H1 (cell line): ENCODE measurements at regions of chr12 and their contacts with region 1.

Region 1: DNA sequence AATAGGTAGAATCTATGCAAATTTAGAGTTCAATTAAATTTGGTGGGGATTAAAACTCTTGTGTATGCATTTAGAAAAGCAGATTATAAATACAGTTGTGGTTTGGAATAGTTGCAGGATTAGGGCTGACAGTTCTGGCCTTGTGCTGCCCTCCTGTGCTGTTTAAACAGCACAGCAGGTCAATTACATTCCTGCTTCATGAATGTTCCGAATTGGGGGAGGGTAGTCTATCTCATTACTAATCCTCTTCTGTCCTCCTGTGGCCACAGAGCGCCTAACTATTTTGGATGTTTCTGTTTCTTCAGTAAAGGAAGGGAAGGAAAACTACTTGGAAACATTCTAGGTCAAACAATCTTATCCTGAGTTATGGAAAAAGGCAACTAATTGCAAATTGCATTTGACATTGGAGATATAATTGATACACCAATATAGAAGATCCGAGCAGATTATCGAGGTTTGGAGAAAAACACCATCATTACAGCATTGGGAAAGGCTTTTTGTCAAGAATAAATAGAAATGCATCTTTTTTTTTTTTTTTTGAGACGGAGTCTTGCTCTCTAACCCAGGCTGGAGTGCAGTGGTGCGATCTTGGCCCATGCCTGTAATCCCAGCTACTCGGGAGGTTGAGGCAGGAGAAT is 8.7 kb upstream of the GPR19 start:
- DNase-seq: no peak
- H3K4me3 ChIP-seq: no peak overlapping the region
- H3K27ac ChIP-seq: no peak overlapping the region
- H3K4me1 ChIP-seq: peaks cover 0 to 5% (median 2%) of the 10 kb centered on the region in 4 experiments; a peak in 4 of 7 replicates
- H3K27me3 ChIP-seq: no peaks in the 10 kb centered on the region
- CTCF ChIP-seq: peak; percentile 44 to 99 (median 99)
- EP300 ChIP-seq: no peak
- POLR2A ChIP-seq: no peak
- RAD21 ChIP-seq: peak; percentile 100

Region 2: GRCh38 chr12:12376646-12377448 is 327.9 kb before region 1 on chr12:
- CTCF ChIA-PET with region 1: interaction called, 49 read pairs
- POLR2A ChIA-PET with region 1: no interaction called
- DNase-seq: no peak
- H3K4me3 ChIP-seq: no peak overlapping the region
- H3K27ac ChIP-seq: no peak overlapping the region
- H3K4me1 ChIP-seq: no peaks in the 10 kb centered on the region
- H3K27me3 ChIP-seq: no peaks in the 10 kb centered on the region
- CTCF ChIP-seq: peak in 2 of 3 experiments; percentile 50 to 60; a peak in 2 of 4 replicates
- EP300 ChIP-seq: no peak
- POLR2A ChIP-seq: no peak
- RAD21 ChIP-seq: peak; percentile 95 to 97

Region 3: GRCh38 chr12:12654691-12655460 is 49.8 kb before region 1 on chr12:
- CTCF ChIA-PET with region 1: interaction called, 14 read pairs
- POLR2A ChIA-PET with region 1: interaction called, 3 read pairs
- DNase-seq: no peak
- H3K4me3 ChIP-seq: no peak overlapping the region
- H3K27ac ChIP-seq: no peak overlapping the region
- H3K4me1 ChIP-seq: peaks cover 2 to 9% (median 5%) of the 10 kb centered on the region in 4 experiments
- H3K27me3 ChIP-seq: no peaks in the 10 kb centered on the region
- CTCF ChIP-seq: no peak
- EP300 ChIP-seq: no peak
- POLR2A ChIP-seq: no peak
- RAD21 ChIP-seq: no peak

Region 4: GRCh38 chr12:12673296-12673695 is 31.4 kb before region 1 on chr12:
- CTCF ChIA-PET with region 1: interaction called, 13 read pairs
- POLR2A ChIA-PET with region 1: interaction called, 3 read pairs
- DNase-seq: peak in 1 of 2 experiments; percentile 39
- H3K4me3 ChIP-seq: no peak overlapping the region
- H3K27ac ChIP-seq: no peak overlapping the region
- H3K4me1 ChIP-seq: peaks cover 0 to 14% (median 7%) of the 10 kb centered on the region in 4 experiments; a peak in 6 of 7 replicates
- H3K27me3 ChIP-seq: peaks cover 15 to 32% (median 27%) of the 10 kb centered on the region in 4 experiments
- CTCF ChIP-seq: no peak
- EP300 ChIP-seq: no peak
- POLR2A ChIP-seq: no peak
- RAD21 ChIP-seq: no peak

Region 5: DNA sequence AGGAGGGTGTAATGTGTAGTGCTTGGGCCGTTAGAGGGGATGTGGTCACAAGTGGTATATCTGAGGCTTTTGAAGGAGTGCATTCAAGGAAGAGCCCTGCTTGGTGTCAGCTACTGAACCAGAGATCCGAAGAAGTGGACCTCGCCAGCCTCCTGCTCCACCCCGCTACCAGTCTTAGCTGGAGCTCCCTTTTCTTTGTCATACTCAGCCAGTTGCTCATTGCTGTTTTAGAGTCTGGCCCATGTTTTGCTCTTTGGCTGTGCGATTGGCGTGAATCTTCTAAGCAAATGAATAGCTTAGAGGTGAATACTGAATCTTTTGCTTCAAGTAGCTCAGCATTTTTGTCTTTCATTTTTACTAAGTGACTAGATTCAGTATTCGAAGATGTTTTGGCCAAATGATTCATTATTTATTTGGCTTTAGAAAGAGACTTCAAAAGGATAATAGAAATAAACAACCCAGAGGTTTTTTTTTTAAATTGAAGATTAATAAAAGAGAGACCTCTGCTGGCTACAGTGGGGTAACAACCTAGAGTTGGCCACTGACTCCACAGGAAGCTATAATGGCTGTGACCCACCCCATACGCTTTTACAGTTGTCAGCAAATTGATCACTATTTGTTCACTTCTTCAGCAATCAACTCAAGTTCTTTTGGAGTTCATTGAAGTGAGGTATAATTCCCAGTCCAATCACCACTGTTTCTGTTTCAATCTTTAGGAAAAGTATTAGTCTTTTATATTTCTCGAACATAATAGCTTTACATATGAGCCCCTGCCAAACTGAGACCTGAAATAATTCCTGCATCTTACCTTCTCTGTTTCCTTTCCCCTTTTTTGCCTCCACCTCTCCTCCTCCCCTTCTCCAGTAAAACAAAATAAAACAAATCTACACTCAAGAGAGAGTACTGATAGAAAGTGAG is 32.3 kb after region 1 on chr12:
- CTCF ChIA-PET with region 1: interaction called, 10 read pairs
- POLR2A ChIA-PET with region 1: no interaction called
- DNase-seq: no peak
- H3K4me3 ChIP-seq: no peak overlapping the region
- H3K27ac ChIP-seq: no peak overlapping the region
- H3K4me1 ChIP-seq: no peaks in the 10 kb centered on the region
- H3K27me3 ChIP-seq: no peaks in the 10 kb centered on the region
- CTCF ChIP-seq: peak; percentile 10 to 33 (median 26); a peak in 3 of 4 replicates
- EP300 ChIP-seq: no peak
- POLR2A ChIP-seq: no peak
- RAD21 ChIP-seq: peak; percentile 34 to 41

Region 6: DNA sequence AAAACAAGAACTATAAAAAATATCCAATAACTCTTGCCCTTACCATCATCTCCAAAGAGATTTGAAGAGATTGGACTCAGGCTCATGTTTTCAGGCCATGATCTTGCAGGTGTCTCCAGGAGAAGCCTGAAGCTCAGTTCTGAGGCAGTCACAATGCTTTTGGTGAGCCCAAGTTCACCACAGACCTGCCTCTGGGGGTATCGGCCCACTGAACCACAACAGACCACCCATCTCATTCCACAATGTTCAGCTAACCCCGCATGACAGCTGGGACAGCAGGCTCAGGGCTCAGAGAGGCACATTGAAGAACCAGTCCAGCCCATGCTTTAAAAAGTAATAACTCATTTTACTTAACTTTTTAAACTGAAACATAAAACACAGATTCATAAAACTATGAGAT is 52.4 kb after region 1 on chr12:
- CTCF ChIA-PET with region 1: no interaction called
- POLR2A ChIA-PET with region 1: no interaction called
- DNase-seq: no peak
- H3K4me3 ChIP-seq: no peak overlapping the region
- H3K27ac ChIP-seq: no peak overlapping the region
- H3K4me1 ChIP-seq: no peaks in the 10 kb centered on the region
- H3K27me3 ChIP-seq: no peaks in the 10 kb centered on the region
- CTCF ChIP-seq: no peak
- EP300 ChIP-seq: no peak
- POLR2A ChIP-seq: no peak
- RAD21 ChIP-seq: no peak

Region 7: GRCh38 chr12:12975322-12976077 is 270.8 kb after region 1 on chr12:
- CTCF ChIA-PET with region 1: no interaction called
- POLR2A ChIA-PET with region 1: no interaction called
- DNase-seq: no peak
- H3K4me3 ChIP-seq: no peak overlapping the region
- H3K27ac ChIP-seq: no peak overlapping the region
- H3K4me1 ChIP-seq: peaks cover 0 to 3% (median 0%) of the 10 kb centered on the region in 4 experiments; a peak in 1 of 7 replicates
- H3K27me3 ChIP-seq: no peaks in the 10 kb centered on the region
- CTCF ChIP-seq: peak; percentile 60 to 80 (median 73)
- EP300 ChIP-seq: no peak
- POLR2A ChIP-seq: no peak
- RAD21 ChIP-seq: peak; percentile 75 to 84